Colonic mucosa (tissue), 4 donors: ENCODE measurements at regions of chr6 and their contacts with region 1.

Region 1: GRCh38 chr6:139655790-139656687 is 281.6 kb upstream of the CITED2 start:
- DNase-seq: peak; percentile 90
- H3K4me3 ChIP-seq: no peak overlapping the region
- H3K27ac ChIP-seq: peak overlapping the region; percentile 66
- H3K4me1 ChIP-seq: no peaks in the 10 kb centered on the region
- H3K27me3 ChIP-seq: no peaks in the 10 kb centered on the region
- CTCF ChIP-seq: no peak

Region 2: DNA sequence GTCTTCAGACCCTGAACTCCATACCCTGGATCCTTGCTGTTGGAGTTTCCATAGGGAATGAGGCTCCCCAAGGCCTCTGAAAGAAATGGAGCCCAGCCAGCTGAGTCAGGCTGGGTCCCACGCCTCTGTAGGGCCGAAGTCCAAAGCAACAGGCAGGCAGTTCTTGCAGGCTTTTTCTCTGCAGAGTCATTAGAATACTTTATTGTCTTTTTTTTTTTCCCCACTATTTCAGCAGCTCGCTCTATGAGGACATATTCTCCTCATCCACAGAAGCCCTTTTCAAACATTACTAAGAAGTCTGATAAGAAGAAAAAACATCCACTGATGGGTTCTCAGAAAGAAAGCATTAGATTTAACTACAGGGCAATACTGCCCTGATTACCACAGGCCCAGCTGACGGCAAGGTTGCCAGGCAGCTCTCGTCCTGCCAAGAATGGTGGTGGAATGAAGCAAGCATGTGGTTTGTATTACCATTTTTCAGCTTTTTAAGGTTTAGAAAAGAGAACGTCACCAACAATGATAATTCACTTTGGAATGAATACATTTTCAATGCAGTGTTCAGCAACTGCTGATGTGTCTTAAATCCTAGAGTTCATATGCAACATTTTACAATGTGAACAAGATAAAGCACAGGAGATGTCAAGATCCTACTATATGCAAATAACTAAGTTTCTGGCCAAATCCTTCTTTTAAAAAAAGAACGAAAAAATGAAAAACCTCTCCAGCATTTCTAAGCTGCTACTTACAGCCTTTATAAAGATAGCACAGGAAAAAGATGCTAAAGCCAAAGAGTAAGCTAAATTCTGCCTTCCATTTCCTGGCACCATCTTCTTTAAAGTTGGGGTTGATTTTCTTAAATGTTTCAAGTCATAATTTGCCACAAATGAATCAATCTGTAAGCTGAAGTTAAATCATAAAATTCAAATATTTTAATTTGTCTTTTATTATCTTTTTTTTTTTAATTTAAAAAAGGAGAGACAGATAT is 58.0 kb before region 1 on chr6:
- intact Hi-C with region 1: loop called (anchors 5 kb)
- DNase-seq: peak; percentile 90
- H3K4me3 ChIP-seq: no peak overlapping the region
- H3K27ac ChIP-seq: peak overlapping the region; percentile 86
- H3K4me1 ChIP-seq: peaks cover 6% of the 10 kb centered on the region
- H3K27me3 ChIP-seq: no peaks in the 10 kb centered on the region
- CTCF ChIP-seq: no peak

Region 3: GRCh38 chr6:139699335-139699734 is 43.3 kb after region 1 on chr6:
- intact Hi-C with region 1: loop called (anchors 5 kb)
- DNase-seq: no peak
- H3K4me3 ChIP-seq: no peak overlapping the region
- H3K27ac ChIP-seq: peak overlapping the region; percentile 45
- H3K4me1 ChIP-seq: peaks cover 3% of the 10 kb centered on the region
- H3K27me3 ChIP-seq: no peaks in the 10 kb centered on the region
- CTCF ChIP-seq: no peak

Region 4: GRCh38 chr6:139881728-139882211 is 225.7 kb after region 1 on chr6:
- intact Hi-C with region 1: no loop called
- DNase-seq: peak; percentile 66
- H3K4me3 ChIP-seq: no peak overlapping the region
- H3K27ac ChIP-seq: no peak overlapping the region
- H3K4me1 ChIP-seq: peaks cover 4% of the 10 kb centered on the region
- H3K27me3 ChIP-seq: no peaks in the 10 kb centered on the region
- CTCF ChIP-seq: peak; percentile 65